PC-9 (cell line): ENCODE measurements at regions of chr3 and their contacts with region 1.

Region 1: DNA sequence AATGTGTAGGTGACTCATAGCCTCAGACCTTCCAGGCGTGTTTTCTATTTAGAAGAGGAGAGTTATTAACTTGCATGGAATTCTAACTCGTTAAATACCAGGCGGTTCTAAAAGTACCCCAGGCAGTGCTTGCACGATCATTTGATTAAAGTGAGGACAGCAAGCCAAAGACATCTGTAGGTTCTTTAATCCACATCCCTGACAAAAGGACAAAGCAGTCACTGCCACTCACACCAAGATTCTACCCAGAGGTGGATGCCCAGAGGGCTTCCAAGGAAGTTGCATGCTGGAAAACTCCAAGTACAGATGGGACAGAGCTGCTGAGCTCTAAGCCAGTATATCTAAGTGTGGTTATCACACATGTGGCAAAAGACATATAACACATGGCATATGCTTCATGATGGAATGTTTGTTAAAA is 372.1 kb downstream of the ROBO2 start:
- DNase-seq: peak in 1 of 2 experiments; percentile 12
- H3K4me3 ChIP-seq: no peak overlapping the region
- H3K27ac ChIP-seq: no peak overlapping the region
- H3K4me1 ChIP-seq: no peaks in the 10 kb centered on the region
- H3K27me3 ChIP-seq: no peaks in the 10 kb centered on the region
- CTCF ChIP-seq: no peak

Region 2: DNA sequence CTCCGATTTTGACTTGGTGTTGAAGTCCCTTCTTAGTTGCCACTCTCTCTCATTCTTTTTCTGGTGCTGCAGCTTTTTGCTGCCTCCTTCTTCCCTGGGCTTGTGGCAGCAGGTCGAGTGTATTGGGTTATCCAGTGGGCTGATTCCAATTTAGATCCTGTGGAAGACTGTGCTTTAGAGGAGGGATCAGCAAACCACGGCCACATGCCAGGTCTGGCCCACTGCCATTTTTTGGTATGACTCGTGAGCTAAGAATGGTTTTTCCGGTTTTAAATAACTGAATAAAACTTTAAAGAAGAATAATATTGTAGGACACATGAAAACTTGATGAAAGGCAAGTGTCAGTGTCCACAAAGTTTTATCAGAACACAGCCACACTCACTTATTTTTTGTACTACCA is 41.6 kb before region 1 on chr3:
- CTCF ChIA-PET with region 1: no interaction called
- POLR2A ChIA-PET with region 1: no interaction called
- intact Hi-C with region 1: loop called (anchors 5 kb)
- DNase-seq: peak in 1 of 2 experiments; percentile 41
- H3K4me3 ChIP-seq: no peak overlapping the region
- H3K27ac ChIP-seq: no peak overlapping the region
- H3K4me1 ChIP-seq: no peaks in the 10 kb centered on the region
- H3K27me3 ChIP-seq: no peaks in the 10 kb centered on the region
- CTCF ChIP-seq: no peak